Activated CD4-positive, alpha-beta memory T cell treated with anti-CD3 and anti-CD28 coated beads for 36 hours (primary cell): ENCODE measurements at regions of chr11 and their contacts with region 1.

Region 1: GRCh38 chr11:118033443-118033842 is 43.4 kb upstream of the TMPRSS4 start:
- DNase-seq: peak; percentile 49
- H3K4me3 Mint-ChIP-seq: no peak overlapping the region
- H3K27ac Mint-ChIP-seq: peak overlapping the region; percentile 72
- H3K4me1 Mint-ChIP-seq: peaks cover 33% of the 10 kb centered on the region
- H3K27me3 Mint-ChIP-seq: no peaks in the 10 kb centered on the region

Region 2: GRCh38 chr11:117443266-117444195 is 589.9 kb before region 1 on chr11:
- CTCF ChIA-PET with region 1: no interaction called
- POLR2A ChIA-PET with region 1: no interaction called
- intact Hi-C with region 1: no loop called
- DNase-seq: peak; percentile 66
- H3K4me3 Mint-ChIP-seq: no peak overlapping the region
- H3K27ac Mint-ChIP-seq: no peak overlapping the region
- H3K4me1 Mint-ChIP-seq: no peaks in the 10 kb centered on the region
- H3K27me3 Mint-ChIP-seq: peaks cover 32% of the 10 kb centered on the region

Region 3: GRCh38 chr11:118012083-118012669 is 21.3 kb before region 1 on chr11:
- CTCF ChIA-PET with region 1: interaction called, 3 read pairs
- POLR2A ChIA-PET with region 1: interaction called, 4 read pairs
- intact Hi-C with region 1: loop called (anchors 1 kb)
- DNase-seq: peak; percentile 52
- H3K4me3 Mint-ChIP-seq: no peak overlapping the region
- H3K27ac Mint-ChIP-seq: peak overlapping the region; percentile 63
- H3K4me1 Mint-ChIP-seq: peaks cover 81% of the 10 kb centered on the region
- H3K27me3 Mint-ChIP-seq: no peaks in the 10 kb centered on the region

Region 4: DNA sequence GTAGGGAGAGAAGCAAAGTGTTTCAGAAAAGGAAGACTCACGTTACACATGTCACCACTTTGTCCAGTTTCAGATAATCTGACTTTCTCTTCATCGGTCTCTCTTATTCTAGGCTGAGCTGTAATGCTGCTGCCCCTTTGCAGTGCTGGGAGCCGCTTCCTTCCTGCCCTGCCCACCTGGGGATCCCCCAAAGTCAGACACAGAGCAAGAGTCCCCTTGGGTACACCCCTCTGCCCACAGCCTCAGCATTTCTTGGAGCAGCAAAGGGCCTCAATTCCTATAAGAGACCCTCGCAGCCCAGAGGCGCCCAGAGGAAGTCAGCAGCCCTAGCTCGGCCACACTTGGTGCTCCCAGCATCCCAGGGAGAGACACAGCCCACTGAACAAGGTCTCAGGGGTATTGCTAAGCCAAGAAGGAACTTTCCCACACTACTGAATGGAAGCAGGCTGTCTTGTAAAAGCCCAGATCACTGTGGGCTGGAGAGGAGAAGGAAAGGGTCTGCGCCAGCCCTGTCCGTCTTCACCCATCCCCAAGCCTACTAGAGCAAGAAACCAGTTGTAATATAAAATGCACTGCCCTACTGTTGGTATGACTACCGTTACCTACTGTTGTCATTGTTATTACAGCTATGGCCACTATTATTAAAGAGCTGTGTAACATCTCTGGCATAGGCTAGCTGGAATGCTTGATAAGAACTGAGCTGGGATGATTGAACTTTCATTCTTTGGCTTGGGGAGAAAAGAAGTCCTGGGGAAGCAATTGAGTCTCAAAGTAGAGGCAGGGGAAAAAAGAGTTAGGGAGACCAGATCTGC is 84.6 kb after region 1 on chr11:
- CTCF ChIA-PET with region 1: no interaction called
- POLR2A ChIA-PET with region 1: no interaction called
- intact Hi-C with region 1: no loop called
- DNase-seq: no peak
- H3K4me3 Mint-ChIP-seq: no peak overlapping the region
- H3K27ac Mint-ChIP-seq: no peak overlapping the region
- H3K4me1 Mint-ChIP-seq: no peaks in the 10 kb centered on the region
- H3K27me3 Mint-ChIP-seq: peaks cover 2% of the 10 kb centered on the region